ENCODE measurements at regions of chr14 and their contacts with region 1.

Region 1: GRCh38 chr14:85528080-85528896 is 1.7 kb upstream of the FLRT2 start:
- DNase-seq: no peak
- H3K4me3 ChIP-seq: peak overlapping the region; percentile 53 to 76 (median 68)
- H3K27ac ChIP-seq: no peak overlapping the region
- H3K4me1 ChIP-seq: peaks cover 7 to 25% (median 9%) of the 10 kb centered on the region in 4 experiments; a peak in 6 of 7 replicates
- H3K27me3 ChIP-seq: peaks cover 25 to 48% (median 41%) of the 10 kb centered on the region in 4 experiments
- CTCF ChIP-seq: peak; percentile 26 to 64 (median 60)
- EP300 ChIP-seq: no peak
- POLR2A ChIP-seq: no peak
- RAD21 ChIP-seq: peak; percentile 87 to 89

Region 2: DNA sequence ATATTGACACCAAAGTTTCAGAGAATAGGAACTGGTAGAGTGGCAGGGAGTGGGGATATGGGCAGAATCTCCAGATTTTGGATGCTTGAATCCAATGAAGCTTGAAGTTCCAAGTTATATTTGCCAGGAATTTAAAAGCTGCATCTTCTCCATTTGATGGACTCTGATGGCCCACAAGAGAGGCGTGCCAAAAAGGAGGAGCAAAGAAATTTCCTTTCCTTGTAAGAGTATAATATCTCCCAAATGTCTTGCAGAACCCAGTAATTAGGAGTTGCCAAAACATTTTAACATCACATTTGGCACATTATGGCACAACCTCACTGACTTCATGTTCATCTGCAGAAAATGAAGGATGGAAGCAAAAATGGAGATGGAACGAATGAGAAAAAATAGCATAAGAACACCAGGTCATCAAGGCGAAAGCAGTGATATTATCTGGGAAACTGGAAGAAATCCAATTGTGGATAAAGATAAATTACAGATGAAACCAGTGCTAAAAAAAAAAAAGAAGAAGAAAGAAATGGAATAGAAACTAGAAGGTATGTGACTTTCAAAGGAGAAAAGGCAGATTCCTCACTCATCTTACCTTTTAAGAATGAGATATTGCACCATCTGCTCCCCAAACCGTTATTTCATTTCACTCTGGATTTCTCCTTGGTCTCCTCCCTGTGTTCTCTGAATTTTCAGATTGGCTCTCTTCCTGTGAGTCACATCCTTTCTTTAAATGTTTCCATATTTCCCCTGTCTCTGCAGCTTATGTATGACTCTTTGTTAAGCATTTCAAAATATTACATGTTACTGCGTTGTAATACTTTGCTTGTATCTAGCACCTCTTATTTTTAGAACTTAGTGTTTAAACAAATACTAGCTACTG is 11.8 kb before region 1 on chr14:
- CTCF ChIA-PET with region 1: interaction called, 12 read pairs
- POLR2A ChIA-PET with region 1: interaction called, 7 read pairs
- DNase-seq: no peak
- H3K4me3 ChIP-seq: no peak overlapping the region
- H3K27ac ChIP-seq: no peak overlapping the region
- H3K4me1 ChIP-seq: no peaks in the 10 kb centered on the region
- H3K27me3 ChIP-seq: no peaks in the 10 kb centered on the region
- CTCF ChIP-seq: no peak
- EP300 ChIP-seq: no peak
- POLR2A ChIP-seq: no peak
- RAD21 ChIP-seq: no peak